Gastrocnemius medialis (tissue), 4 donors: ENCODE measurements at regions of chr22 and their contacts with region 1.

Region 1: DNA sequence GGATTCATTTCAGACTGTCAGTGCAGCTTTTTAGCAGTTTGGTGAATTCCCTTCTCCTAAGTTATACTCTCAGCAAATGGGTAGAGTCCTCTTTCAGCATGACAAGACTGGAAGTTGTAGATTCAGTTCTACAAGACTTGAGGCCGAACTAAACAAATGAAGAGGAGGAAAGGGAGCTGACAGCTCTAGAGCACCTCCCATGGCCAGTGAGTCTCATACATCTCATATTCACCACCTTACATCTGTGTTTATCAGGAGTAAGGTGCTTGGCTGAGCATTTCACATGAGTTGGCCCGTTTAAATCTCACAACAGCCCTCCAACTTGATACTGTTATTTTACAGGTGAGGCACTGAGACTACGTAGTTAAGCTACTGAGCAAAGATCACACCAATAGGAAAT is 30.4 kb downstream of the SEZ6L start:
- DNase-seq: no peak
- ATAC-seq: no peak
- H3K4me3 ChIP-seq: no peak overlapping the region
- H3K27ac ChIP-seq: no peak overlapping the region
- H3K4me1 ChIP-seq: peaks cover 0 to under 1% of the 10 kb centered on the region in 2 donors
- H3K27me3 ChIP-seq: no peaks in the 10 kb centered on the region
- CTCF ChIP-seq: no peak
- POLR2A ChIP-seq: no peak

Region 2: GRCh38 chr22:26086359-26086758 is 113.3 kb before region 1 on chr22:
- in situ Hi-C with region 1: loop called in 1 of 4 experiments (anchors 25 kb)
- intact Hi-C with region 1: no loop called
- DNase-seq: no peak
- ATAC-seq: no peak
- H3K4me3 ChIP-seq: no peak overlapping the region
- H3K27ac ChIP-seq: no peak overlapping the region
- H3K4me1 ChIP-seq: no peaks in the 10 kb centered on the region
- H3K27me3 ChIP-seq: peaks cover 0 to 7% (median 0%) of the 10 kb centered on the region in 3 donors
- CTCF ChIP-seq: peak in 1 of 5 experiments; percentile 22
- POLR2A ChIP-seq: no peak

Region 3: DNA sequence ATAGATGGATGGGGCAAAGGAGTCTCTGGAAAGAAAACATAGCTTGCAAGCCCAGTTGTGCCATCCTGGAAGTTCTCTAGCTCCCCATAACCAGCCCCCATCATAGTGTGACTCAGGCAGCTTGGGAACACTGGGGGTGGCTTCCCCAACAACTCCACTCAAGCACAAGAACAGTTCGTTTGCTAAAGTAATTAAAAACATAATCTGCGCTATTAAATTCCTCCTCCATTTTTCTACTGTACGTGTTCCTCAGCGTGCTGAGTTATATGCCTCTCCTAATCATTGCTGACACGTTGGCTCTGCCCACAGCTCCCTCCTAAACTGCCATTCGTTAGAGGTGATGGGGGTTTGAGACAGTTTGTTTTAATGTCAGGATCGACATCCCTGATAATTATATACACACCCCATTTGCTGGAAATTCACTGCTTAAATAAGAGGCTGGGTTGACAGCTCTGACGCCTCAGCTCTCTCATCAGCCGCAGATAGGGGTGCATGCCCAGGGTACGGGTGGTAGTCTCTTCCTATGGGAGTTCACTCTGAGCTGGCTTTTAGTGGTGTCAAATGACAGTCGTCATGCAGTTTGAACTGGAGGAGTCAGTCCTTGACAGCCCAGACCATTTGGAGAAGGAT is 89.9 kb before region 1 on chr22:
- in situ Hi-C with region 1: no loop called
- intact Hi-C with region 1: no loop called
- DNase-seq: no peak
- ATAC-seq: no peak
- H3K4me3 ChIP-seq: no peak overlapping the region
- H3K27ac ChIP-seq: no peak overlapping the region
- H3K4me1 ChIP-seq: no peaks in the 10 kb centered on the region
- H3K27me3 ChIP-seq: peaks cover 4 to 30% (median 8%) of the 10 kb centered on the region in 3 donors
- CTCF ChIP-seq: no peak
- POLR2A ChIP-seq: no peak